ENCODE measurements at regions of chr5 and their contacts with region 1.

Region 1: GRCh38 chr5:10283927-10284635 is 23.6 kb downstream of the CMBL start:
- DNase-seq: peak; percentile 78
- H3K4me3 ChIP-seq: no peak overlapping the region
- H3K27ac ChIP-seq: no peak overlapping the region
- H3K4me1 ChIP-seq: no peaks in the 10 kb centered on the region
- H3K27me3 ChIP-seq: no peaks in the 10 kb centered on the region
- CTCF ChIP-seq: peak; percentile 92 to 98
- POLR2A ChIP-seq: no peak

Region 2: DNA sequence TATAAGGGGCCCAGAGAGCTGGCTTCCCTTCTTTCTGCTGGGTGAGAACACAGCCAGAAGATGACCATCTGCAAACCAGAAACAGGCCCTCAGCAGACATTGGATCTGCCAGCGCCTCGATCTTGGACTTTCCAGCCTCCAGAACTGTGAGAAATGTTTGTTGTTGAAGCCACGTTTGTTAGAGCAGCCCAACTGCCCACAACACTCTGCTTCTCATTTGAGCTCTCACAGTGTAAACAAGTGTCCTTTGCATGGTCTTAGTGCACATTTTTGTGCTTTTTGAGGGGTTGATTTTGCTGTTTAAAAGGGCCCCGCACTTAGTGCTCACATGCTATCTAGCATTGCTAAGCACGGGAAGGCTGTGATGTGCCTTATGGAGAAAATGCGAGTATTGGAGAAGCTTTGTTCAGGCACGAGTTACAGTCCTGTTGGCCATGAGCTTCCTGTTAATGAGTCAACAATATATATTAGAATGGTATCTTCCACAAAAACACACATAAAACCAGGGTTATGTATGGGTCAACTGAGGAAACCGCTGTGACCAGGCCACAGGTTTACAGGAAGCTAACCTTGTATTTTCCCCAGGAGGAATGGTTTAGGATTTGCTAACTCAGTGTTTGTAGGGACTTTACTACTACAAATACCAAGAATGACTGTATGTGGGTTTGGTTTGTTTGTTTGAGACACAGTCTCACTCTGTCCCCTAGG is 11.7 kb after region 1 on chr5:
- CTCF ChIA-PET with region 1: interaction called, 10 read pairs
- POLR2A ChIA-PET with region 1: no interaction called
- dilution Hi-C with region 1: no loop called
- intact Hi-C with region 1: no loop called
- DNase-seq: peak; percentile 44
- H3K4me3 ChIP-seq: no peak overlapping the region
- H3K27ac ChIP-seq: peak overlapping the region; percentile 5
- H3K4me1 ChIP-seq: peaks cover 4% of the 10 kb centered on the region
- H3K27me3 ChIP-seq: no peaks in the 10 kb centered on the region
- CTCF ChIP-seq: no peak
- POLR2A ChIP-seq: no peak

Region 3: DNA sequence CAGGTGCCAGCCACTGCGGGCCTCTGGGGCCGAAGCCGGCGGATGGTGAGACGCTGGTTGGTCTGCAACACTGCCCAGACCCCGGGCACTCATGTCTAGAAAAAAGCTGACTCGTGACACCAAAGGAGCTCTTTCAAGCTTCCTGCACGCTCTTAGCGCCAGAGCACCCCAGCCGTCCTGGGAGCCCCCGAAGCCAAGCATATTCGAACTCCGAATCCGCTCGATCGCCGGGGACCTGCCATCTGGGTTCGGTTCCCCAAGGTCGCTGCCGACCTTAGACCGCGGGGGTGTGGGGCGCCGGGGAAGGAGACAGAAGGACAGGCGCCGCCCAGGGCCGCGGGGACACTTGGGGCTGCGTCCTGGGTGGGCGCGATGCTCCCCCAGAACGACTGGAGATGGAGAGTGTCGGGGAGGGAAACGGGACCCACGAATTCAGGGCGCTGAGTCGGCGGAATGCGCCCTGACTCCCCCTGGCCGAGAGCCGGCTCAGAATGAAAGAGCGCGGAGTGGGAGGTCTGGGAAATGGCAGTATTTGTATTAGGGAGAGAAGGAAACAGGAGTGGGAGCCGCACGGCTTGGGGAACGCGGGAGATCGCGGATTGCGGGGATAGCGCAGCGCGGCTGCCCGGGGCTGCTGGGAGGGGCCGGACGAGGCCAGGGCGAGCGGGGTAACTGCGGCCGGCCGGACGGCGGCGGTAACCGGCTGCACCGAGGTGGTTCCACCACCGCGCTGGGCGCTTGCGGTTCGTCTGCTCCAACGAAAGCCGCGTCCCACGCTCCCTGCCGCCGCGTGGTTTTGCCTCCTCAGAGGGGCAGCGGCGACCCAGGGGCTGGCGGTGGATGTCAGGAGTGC is 49.3 kb after region 1 on chr5:
- CTCF ChIA-PET with region 1: interaction called, 21 read pairs
- POLR2A ChIA-PET with region 1: no interaction called
- dilution Hi-C with region 1: no loop called
- intact Hi-C with region 1: loop called (anchors 1 kb)
- DNase-seq: peak; percentile 39
- H3K4me3 ChIP-seq: peak overlapping the region; percentile 28 to 56 (median 49)
- H3K27ac ChIP-seq: no peak overlapping the region
- H3K4me1 ChIP-seq: no peaks in the 10 kb centered on the region
- H3K27me3 ChIP-seq: peaks cover 9 to 16% of the 10 kb centered on the region in 2 experiments
- CTCF ChIP-seq: peak in 1 of 2 donors; percentile 30
- POLR2A ChIP-seq: no peak

Region 4: GRCh38 chr5:10364186-10364683 is 80.2 kb after region 1 on chr5:
- CTCF ChIA-PET with region 1: interaction called, 18 read pairs
- POLR2A ChIA-PET with region 1: no interaction called
- dilution Hi-C with region 1: no loop called
- intact Hi-C with region 1: no loop called
- DNase-seq: no peak
- H3K4me3 ChIP-seq: no peak overlapping the region
- H3K27ac ChIP-seq: no peak overlapping the region
- H3K4me1 ChIP-seq: no peaks in the 10 kb centered on the region
- H3K27me3 ChIP-seq: no peaks in the 10 kb centered on the region
- CTCF ChIP-seq: no peak
- POLR2A ChIP-seq: no peak

Region 5: GRCh38 chr5:10424124-10424731 is 140.1 kb after region 1 on chr5:
- CTCF ChIA-PET with region 1: interaction called, 87 read pairs
- POLR2A ChIA-PET with region 1: no interaction called
- dilution Hi-C with region 1: no loop called
- intact Hi-C with region 1: loop called (anchors 1 kb)
- DNase-seq: peak; percentile 42
- H3K4me3 ChIP-seq: no peak overlapping the region
- H3K27ac ChIP-seq: no peak overlapping the region
- H3K4me1 ChIP-seq: peaks cover 29% of the 10 kb centered on the region
- H3K27me3 ChIP-seq: no peaks in the 10 kb centered on the region
- CTCF ChIP-seq: peak; percentile 40 to 68
- POLR2A ChIP-seq: no peak

Measured in endothelial cell of umbilical vein (primary cell).